PC-3 (cell line): ENCODE measurements at regions of chr17 and their contacts with region 1.

Region 1: GRCh38 chr17:58317421-58318064 is 11.1 kb downstream of the TSPOAP1 start:
- DNase-seq: peak; percentile 95
- ATAC-seq: peak; percentile 87
- H3K4me3 ChIP-seq: no peak overlapping the region
- H3K27ac ChIP-seq: 0 out of 2 replicates have a peak overlapping the region, but pooled peaks have one; percentile 8
- H3K4me1 ChIP-seq: peaks cover 20% of the 10 kb centered on the region
- H3K27me3 ChIP-seq: no peaks in the 10 kb centered on the region
- CTCF ChIP-seq: peak; percentile 98

Region 2: DNA sequence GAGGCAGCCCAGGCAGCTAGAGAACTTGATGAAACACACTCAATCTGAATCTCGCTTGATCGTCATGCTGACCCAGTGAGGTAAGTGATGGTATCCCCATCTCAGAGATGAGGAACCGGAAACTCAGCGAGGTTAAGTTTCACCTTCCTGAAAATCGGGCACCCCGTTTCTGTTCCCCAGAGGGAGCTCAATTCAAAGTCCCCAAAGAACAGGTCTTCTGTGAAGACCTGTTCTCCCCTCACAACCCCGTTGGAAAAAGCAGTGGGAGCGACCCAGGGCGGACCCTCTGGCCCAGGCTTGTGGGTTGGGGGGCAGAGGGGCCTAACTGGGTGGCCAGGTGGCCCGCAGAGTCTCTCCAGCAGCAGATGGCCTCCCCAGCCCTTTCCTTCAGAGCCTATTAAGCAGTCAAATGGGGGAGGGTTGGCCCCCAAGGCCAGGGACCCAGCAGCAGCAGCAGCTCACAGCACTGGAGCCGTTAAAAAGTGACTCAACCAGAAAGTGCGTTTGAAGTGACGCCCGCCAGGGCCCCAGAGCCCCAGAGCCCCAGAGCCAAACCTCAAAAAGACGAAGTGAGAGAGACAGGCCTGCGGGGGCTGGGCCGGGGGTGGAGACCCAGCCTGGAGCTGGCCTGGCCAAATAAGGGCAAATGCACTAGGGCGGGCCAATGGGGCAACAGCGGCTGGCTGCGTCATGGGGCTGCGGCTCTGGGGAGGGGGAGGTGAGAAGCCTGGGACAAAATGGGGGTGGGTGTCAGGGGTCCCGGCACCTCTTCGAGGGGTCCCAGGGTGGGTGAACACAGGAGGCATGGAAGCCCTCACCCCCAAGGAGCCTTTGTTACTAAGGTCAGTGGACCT is 20.3 kb after region 1 on chr17:
- CTCF ChIA-PET with region 1: no interaction called
- POLR2A ChIA-PET with region 1: no interaction called
- intact Hi-C with region 1: no loop called
- DNase-seq: no peak
- ATAC-seq: no peak
- H3K4me3 ChIP-seq: no peak overlapping the region
- H3K27ac ChIP-seq: no peak overlapping the region
- H3K4me1 ChIP-seq: peaks cover 6% of the 10 kb centered on the region; the same call in 1 of the 2 replicates
- H3K27me3 ChIP-seq: no peaks in the 10 kb centered on the region
- CTCF ChIP-seq: no peak

Region 3: DNA sequence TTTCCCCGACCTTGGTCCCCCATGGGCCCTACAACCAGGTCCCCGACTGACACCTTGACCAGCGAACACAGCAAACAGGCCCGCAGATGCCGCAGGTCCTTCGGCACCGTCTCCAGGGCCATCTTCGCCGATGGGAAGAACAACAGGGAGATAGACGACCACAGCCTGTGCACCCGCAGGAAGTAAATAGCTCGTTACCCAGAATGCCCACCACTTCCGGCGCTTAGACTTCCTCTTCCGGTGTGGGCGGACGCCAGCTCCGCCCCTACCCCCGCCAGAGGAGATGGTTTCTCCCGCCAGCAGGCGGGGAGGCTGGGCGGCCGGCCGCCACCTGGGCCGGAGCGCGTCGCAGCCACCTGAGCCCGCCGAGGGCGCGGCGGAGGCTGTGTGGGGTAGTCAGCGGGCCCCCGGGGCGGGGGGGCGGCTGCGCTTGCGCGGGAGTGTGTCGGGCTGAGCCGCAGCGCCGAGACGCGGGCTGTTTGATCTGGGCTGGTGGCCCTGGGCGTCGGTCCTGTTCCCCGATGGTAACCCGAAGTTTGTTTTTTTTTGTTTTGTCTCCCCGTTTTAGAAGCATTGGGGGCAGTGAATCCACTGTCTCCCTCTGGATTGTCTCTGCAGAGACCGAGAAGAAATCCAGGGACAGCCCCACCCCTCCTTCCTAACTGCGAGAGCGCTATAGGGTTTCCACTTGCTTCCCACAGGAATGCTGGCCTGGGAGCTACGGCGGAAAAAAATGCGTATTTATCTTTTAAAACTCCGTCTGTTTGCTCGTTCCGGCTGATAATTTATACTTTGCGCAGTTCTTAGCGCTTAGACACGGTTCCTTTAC is 34.7 kb after region 1 on chr17 and contains the start of gene SUPT4H1:
- CTCF ChIA-PET with region 1: interaction called, 17 read pairs
- POLR2A ChIA-PET with region 1: interaction called, 10 read pairs
- intact Hi-C with region 1: loop called (anchors 1 kb)
- DNase-seq: peak; percentile 99
- ATAC-seq: peak; percentile 95
- H3K4me3 ChIP-seq: peak within 1 kb of the TSS; percentile 97
- H3K27ac ChIP-seq: peak within 1 kb of the TSS; percentile 63
- H3K4me1 ChIP-seq: peaks cover 15% of the 10 kb centered on the region
- H3K27me3 ChIP-seq: no peaks in the 10 kb centered on the region
- CTCF ChIP-seq: no peak
- total RNA-seq, gene SUPT4H1: 100.0 and 116 TPM in 2 replicates

Region 4: DNA sequence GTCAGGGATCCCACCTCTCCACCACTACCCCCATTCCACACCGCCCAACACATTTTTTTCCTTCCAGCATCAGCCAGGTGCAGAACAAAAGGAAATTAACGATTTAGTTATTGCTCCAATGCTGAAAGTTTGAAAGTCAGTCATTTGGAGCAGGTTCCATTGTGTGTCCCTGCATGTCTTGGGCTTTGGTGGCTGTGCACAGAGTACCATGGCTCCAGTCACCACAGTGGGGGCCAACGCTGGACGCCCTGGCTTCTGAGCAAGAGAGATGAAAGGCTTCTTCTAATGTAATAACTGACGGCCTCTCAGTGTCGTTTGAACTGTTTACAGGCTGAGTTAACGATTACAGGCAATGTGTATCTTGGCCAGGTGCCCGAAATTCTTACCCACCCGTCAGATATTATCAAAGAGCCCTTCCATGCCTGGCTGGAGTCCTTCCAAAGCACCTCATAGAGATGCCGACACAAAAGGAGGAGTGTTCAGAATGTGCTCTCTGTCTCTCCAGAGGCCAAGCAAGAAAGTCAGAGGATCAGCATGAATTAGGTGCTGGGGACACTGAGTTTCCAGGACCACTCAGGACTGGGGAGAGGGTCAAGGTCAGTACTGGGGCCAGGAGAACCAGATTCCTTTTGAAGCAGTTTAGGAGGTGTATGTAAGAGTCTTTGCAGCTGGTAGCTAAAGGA is 73.9 kb after region 1 on chr17:
- CTCF ChIA-PET with region 1: no interaction called
- POLR2A ChIA-PET with region 1: no interaction called
- intact Hi-C with region 1: no loop called
- DNase-seq: peak; percentile 99
- ATAC-seq: peak; percentile 58
- H3K4me3 ChIP-seq: no peak overlapping the region
- H3K27ac ChIP-seq: peak overlapping the region; percentile 20; the same call in 1 of the 2 replicates
- H3K4me1 ChIP-seq: peaks cover 57% of the 10 kb centered on the region
- H3K27me3 ChIP-seq: no peaks in the 10 kb centered on the region
- CTCF ChIP-seq: no peak

Region 5: DNA sequence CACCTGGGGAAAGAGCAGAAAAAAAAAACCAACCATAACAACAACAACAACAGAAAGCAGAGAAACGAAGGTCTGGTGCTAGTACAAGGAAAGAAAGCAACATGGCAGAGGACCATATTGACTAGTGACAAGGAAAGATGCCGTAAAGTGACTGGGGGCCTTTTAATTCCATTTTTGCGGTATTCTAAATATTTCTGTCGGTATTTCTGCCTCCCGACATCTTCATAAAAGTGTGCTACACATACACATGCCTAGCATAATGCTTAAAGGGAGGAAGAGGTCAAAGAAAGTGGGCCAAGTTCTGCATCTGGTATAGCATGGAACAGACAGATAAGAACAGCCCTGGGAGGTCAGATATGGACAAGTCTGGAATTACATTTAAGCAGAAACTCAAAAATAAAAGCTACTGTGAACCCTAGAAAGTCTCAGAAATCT is 119.3 kb after region 1 on chr17:
- CTCF ChIA-PET with region 1: interaction called, 12 read pairs
- POLR2A ChIA-PET with region 1: no interaction called
- intact Hi-C with region 1: no loop called
- DNase-seq: no peak
- ATAC-seq: no peak
- H3K4me3 ChIP-seq: no peak overlapping the region
- H3K27ac ChIP-seq: no peak overlapping the region
- H3K4me1 ChIP-seq: no peaks in the 10 kb centered on the region
- H3K27me3 ChIP-seq: peaks cover 43% of the 10 kb centered on the region
- CTCF ChIP-seq: no peak

Region 6: GRCh38 chr17:58447039-58447975 is 129.8 kb after region 1 on chr17:
- CTCF ChIA-PET with region 1: interaction called, 20 read pairs
- POLR2A ChIA-PET with region 1: no interaction called
- intact Hi-C with region 1: loop called (anchors 1 kb)
- DNase-seq: peak; percentile 97
- ATAC-seq: peak; percentile 100
- H3K4me3 ChIP-seq: no peak overlapping the region
- H3K27ac ChIP-seq: no peak overlapping the region
- H3K4me1 ChIP-seq: no peaks in the 10 kb centered on the region
- H3K27me3 ChIP-seq: peaks cover 9% of the 10 kb centered on the region; the same call in 1 of the 2 replicates
- CTCF ChIP-seq: peak; percentile 96